ENCODE measurements at regions of chr12 and their contacts with region 1.

Region 1: DNA sequence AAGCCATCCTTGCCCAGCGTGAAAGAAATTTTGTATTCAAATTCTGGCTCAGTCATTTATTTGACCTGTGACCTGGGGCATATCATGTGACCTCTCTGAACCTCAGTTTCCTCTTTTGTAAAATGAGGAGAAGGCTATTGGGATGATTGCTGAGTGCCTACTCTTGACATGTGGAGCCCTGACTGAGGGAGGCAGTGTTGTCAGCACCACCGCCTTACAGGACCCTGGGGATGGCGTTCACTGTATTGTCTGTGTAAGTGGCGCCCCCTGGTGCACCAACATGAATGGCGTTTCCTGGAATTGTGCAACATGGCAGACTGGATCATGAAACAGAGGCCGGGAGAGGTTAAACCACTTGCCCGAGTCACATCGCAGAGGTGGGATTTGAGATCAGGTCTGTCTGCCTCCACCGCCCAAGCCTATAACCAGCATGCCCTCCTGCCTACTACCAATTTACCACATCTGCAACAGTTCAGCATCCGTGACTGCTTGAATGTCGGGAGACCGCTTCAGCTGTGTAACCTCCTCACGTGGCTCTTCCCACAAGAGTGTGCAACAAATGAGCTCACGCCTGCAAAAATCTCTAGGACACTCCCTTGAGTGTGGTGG is 20.1 kb upstream of the CCDC63 start:
- DNase-seq: peak; percentile 90
- ATAC-seq: peak; percentile 99
- H3K4me3 ChIP-seq: peak overlapping the region in 4 of 5 experiments; percentile 9 to 44 (median 28)
- H3K4me3 Mint-ChIP-seq: peak overlapping the region; percentile 72
- H3K27ac ChIP-seq: no peak overlapping the region
- H3K27ac Mint-ChIP-seq: no peak overlapping the region
- H3K4me1 ChIP-seq: peaks cover 6 to 7% of the 10 kb centered on the region in 2 donors
- H3K4me1 Mint-ChIP-seq: peaks cover 6% of the 10 kb centered on the region
- H3K27me3 ChIP-seq: no peaks in the 10 kb centered on the region
- H3K27me3 Mint-ChIP-seq: peaks cover 10% of the 10 kb centered on the region
- CTCF ChIP-seq: peak; percentile 80

Region 2: GRCh38 chr12:110508071-110508586 is 318.6 kb before region 1 on chr12:
- CTCF ChIA-PET with region 1: interaction called, 12 read pairs
- POLR2A ChIA-PET with region 1: no interaction called
- intact Hi-C with region 1: loop called (anchors 1 kb)
- DNase-seq: no peak
- ATAC-seq: no peak
- H3K4me3 ChIP-seq: no peak overlapping the region
- H3K4me3 Mint-ChIP-seq: no peak overlapping the region
- H3K27ac ChIP-seq: no peak overlapping the region
- H3K27ac Mint-ChIP-seq: no peak overlapping the region
- H3K4me1 ChIP-seq: no peaks in the 10 kb centered on the region
- H3K4me1 Mint-ChIP-seq: no peaks in the 10 kb centered on the region
- H3K27me3 ChIP-seq: no peaks in the 10 kb centered on the region
- H3K27me3 Mint-ChIP-seq: no peaks in the 10 kb centered on the region
- CTCF ChIP-seq: no peak

Region 3: DNA sequence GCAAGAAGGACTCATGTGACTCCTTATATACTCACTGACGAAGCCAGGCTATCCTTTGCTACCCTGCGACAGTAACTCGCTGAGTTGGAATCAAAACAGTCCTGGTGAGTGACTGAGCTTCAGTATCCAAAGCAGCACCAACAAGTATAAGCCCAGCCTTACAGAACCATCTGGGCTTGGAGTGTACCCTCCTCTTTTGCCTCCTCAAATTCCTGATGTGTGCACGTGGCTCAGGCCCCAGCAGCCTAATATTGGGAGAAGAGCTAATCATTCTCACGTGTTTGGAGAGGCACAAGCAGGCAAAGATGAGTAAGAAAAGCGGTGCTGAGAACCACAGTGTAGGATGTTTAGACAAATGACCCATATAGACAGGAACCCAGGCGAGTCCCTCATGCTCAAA is 278.0 kb before region 1 on chr12:
- CTCF ChIA-PET with region 1: interaction called, 37 read pairs
- POLR2A ChIA-PET with region 1: no interaction called
- intact Hi-C with region 1: loop called (anchors 1 kb)
- DNase-seq: no peak
- ATAC-seq: no peak
- H3K4me3 ChIP-seq: no peak overlapping the region
- H3K4me3 Mint-ChIP-seq: no peak overlapping the region
- H3K27ac ChIP-seq: no peak overlapping the region
- H3K27ac Mint-ChIP-seq: no peak overlapping the region
- H3K4me1 ChIP-seq: peaks cover 3 to 5% of the 10 kb centered on the region in 2 donors
- H3K4me1 Mint-ChIP-seq: peaks cover 26% of the 10 kb centered on the region
- H3K27me3 ChIP-seq: no peaks in the 10 kb centered on the region
- H3K27me3 Mint-ChIP-seq: no peaks in the 10 kb centered on the region
- CTCF ChIP-seq: no peak

Region 4: DNA sequence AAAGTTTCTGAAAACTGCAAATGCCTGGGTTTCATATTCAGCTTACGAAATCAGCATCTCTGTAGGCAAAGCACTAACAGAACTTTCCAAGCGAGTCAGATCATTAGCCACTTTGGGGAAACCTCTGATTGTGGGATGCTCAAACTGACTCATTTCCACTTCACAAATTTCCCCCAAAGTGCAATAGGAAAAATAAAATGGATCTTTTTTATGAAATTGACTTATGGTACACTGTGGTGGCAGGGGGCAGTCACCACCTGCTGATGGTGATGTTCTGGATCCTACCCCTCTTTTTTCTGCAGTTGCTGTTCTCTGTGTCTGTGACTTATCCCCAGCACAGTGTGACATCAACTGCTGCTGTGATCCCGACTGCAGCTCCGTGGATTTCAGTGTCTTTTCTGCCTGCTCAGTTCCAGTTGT is 207.2 kb before region 1 on chr12:
- CTCF ChIA-PET with region 1: interaction called, 21 read pairs
- POLR2A ChIA-PET with region 1: no interaction called
- intact Hi-C with region 1: loop called (anchors 1 kb)
- DNase-seq: peak; percentile 76
- ATAC-seq: peak; percentile 75
- H3K4me3 ChIP-seq: peak overlapping the region in 4 of 5 experiments; percentile 30 to 55 (median 44)
- H3K4me3 Mint-ChIP-seq: peak overlapping the region; percentile 89
- H3K27ac ChIP-seq: peak overlapping the region; percentile 63 to 76
- H3K27ac Mint-ChIP-seq: peak overlapping the region; percentile 96
- H3K4me1 ChIP-seq: peaks cover 60 to 81% of the 10 kb centered on the region in 2 donors
- H3K4me1 Mint-ChIP-seq: peaks cover 65% of the 10 kb centered on the region
- H3K27me3 ChIP-seq: no peaks in the 10 kb centered on the region
- H3K27me3 Mint-ChIP-seq: no peaks in the 10 kb centered on the region
- CTCF ChIP-seq: peak; percentile 62

Region 5: GRCh38 chr12:110704748-110705147 is 121.9 kb before region 1 on chr12:
- CTCF ChIA-PET with region 1: interaction called, 11 read pairs
- POLR2A ChIA-PET with region 1: interaction called, 5 read pairs
- intact Hi-C with region 1: loop called (anchors 1 kb)
- DNase-seq: no peak
- ATAC-seq: no peak
- H3K4me3 ChIP-seq: no peak overlapping the region
- H3K4me3 Mint-ChIP-seq: no peak overlapping the region
- H3K27ac ChIP-seq: no peak overlapping the region
- H3K27ac Mint-ChIP-seq: no peak overlapping the region
- H3K4me1 ChIP-seq: no peaks in the 10 kb centered on the region
- H3K4me1 Mint-ChIP-seq: peaks cover 14% of the 10 kb centered on the region
- H3K27me3 ChIP-seq: no peaks in the 10 kb centered on the region
- H3K27me3 Mint-ChIP-seq: no peaks in the 10 kb centered on the region
- CTCF ChIP-seq: no peak

Region 6: DNA sequence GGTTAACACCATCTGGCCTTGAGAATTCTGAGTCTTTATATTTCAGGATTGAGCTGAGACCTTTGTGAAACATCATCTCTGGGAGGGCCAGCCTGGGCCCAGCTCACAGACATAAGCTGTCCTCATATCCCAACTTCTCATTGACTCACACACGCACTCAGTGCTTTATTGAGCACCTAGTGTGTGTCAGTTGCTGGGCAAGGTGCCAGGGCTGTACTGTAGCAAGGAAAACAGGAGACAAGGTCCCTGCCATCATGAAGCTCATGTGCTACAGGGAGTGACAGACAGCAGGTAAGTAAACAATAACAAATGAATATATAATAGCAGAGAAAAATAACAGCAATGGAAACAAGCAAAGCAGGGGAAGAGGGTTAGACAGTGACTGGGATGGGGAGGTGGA is 10.4 kb before region 1 on chr12:
- CTCF ChIA-PET with region 1: interaction called, 13 read pairs
- POLR2A ChIA-PET with region 1: no interaction called
- intact Hi-C with region 1: no loop called
- DNase-seq: no peak
- ATAC-seq: no peak
- H3K4me3 ChIP-seq: no peak overlapping the region
- H3K4me3 Mint-ChIP-seq: no peak overlapping the region
- H3K27ac ChIP-seq: no peak overlapping the region
- H3K27ac Mint-ChIP-seq: no peak overlapping the region
- H3K4me1 ChIP-seq: no peaks in the 10 kb centered on the region
- H3K4me1 Mint-ChIP-seq: peaks cover 3% of the 10 kb centered on the region
- H3K27me3 ChIP-seq: peaks cover 0 to 6% (median 1%) of the 10 kb centered on the region in 4 experiments
- H3K27me3 Mint-ChIP-seq: peaks cover 15% of the 10 kb centered on the region
- CTCF ChIP-seq: no peak

Region 7: DNA sequence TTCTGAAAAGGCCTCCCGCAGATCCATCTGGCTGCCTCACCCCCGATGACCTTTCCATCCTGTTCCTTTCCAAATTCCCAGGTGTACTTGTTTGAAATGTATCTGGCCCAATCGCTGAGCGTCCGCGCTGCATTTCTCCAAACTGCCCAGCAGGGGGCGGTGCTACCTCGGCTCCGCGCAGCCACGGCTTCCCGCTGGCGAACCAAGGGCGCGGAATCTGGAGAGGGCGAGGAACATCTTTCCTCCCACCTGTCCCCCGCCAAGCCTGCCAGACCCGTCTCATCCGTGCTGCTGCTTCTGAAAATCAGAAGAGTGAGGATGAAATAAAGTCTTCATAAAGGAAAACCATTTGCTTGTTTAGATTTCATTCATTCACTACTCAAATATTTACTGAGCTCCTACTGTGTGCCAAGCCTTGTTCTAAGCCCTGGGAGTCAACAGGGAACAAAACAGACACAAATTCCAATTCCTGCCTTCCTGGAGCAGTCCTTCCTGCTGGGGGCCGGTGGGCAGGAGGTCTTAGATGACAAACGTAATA is 110.5 kb after region 1 on chr12:
- CTCF ChIA-PET with region 1: no interaction called
- POLR2A ChIA-PET with region 1: no interaction called
- intact Hi-C with region 1: no loop called
- DNase-seq: peak; percentile 78
- ATAC-seq: peak; percentile 51
- H3K4me3 ChIP-seq: peak overlapping the region in 1 of 5 experiments; percentile 26
- H3K4me3 Mint-ChIP-seq: peak overlapping the region; percentile 19
- H3K27ac ChIP-seq: no peak overlapping the region
- H3K27ac Mint-ChIP-seq: no peak overlapping the region
- H3K4me1 ChIP-seq: peaks cover 3 to 8% of the 10 kb centered on the region in 2 donors
- H3K4me1 Mint-ChIP-seq: peaks cover 6% of the 10 kb centered on the region
- H3K27me3 ChIP-seq: peaks cover 0 to 18% (median 0%) of the 10 kb centered on the region in 4 experiments
- H3K27me3 Mint-ChIP-seq: peaks cover 30% of the 10 kb centered on the region
- CTCF ChIP-seq: peak; percentile 100

Measured in B cell (primary cell).